ENCODE measurements at regions of chr10 and their contacts with region 1.

Region 1: DNA sequence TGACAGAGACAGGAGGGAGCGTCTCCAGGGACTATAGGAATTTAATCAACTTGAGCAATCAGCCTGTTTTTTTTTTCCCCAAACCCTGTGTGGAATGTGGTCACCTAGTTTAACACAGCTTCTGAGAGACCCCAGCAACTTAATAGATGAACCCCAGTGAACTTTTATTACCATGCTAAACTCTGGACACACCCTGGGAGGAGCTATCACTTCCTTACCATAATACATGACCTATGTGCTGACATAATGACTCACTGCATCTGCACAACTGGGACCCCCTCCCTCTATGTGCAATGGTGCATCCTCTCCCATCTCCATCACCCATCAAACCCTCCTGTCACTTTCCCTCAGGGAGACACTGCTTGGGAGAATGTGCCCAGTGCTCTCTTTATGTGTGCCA is 83.7 kb downstream of the EPC1 start:
- DNase-seq: peak in 1 of 2 donors; percentile 24
- H3K4me3 ChIP-seq: no peak overlapping the region
- H3K27ac ChIP-seq: no peak overlapping the region
- H3K4me1 ChIP-seq: no peaks in the 10 kb centered on the region
- H3K27me3 ChIP-seq: no peaks in the 10 kb centered on the region
- CTCF ChIP-seq: no peak
- EP300 ChIP-seq: no peak
- POLR2A ChIP-seq: no peak

Region 2: DNA sequence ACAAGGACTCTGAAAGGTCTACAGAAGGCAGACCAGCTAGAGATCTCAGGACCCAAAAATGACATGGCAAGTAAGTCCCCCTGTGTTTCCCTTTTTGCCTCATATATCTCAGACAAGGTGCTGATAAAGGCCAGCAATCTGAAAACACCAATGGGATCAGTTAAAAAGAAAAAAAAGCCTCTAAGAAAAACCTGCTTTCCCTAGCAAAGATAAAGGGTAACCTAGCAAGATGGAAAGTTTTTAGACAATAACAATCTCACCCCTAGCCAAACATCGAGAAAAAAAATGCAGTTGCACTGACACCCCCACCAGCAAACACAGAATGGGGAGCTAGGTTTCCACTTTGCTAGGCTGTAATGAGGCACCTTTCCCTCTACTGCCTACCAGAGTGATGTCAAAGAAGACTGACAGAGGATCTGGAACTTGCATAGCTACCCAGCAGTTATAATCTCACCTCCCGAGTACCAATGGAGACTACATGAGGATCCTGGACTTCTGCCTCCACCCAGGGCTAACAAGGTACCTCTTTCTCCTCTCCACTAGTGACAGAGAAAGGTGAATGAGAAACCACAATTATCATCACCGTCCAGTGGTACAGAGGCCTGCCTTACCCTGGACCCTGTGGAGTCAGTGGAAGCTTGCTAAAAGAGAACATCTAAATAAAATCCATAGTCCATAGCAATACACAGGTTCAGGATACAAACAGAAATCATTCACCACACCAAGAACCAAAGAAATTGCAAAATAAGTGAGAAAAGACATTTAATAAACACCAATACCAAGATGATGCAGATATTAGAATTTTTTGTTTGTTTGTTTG is 575.4 kb before region 1 on chr10:
- intact Hi-C with region 1: no loop called
- DNase-seq: no peak
- H3K4me3 ChIP-seq: no peak overlapping the region
- H3K27ac ChIP-seq: no peak overlapping the region
- H3K4me1 ChIP-seq: no peaks in the 10 kb centered on the region
- H3K27me3 ChIP-seq: no peaks in the 10 kb centered on the region
- CTCF ChIP-seq: no peak
- EP300 ChIP-seq: no peak
- POLR2A ChIP-seq: no peak

Region 3: GRCh38 chr10:32338262-32338661 is 75.0 kb after region 1 on chr10:
- intact Hi-C with region 1: loop called (anchors 5 kb)
- DNase-seq: no peak
- H3K4me3 ChIP-seq: no peak overlapping the region
- H3K27ac ChIP-seq: no peak overlapping the region
- H3K4me1 ChIP-seq: peaks cover 66 to 99% (median 85%) of the 10 kb centered on the region in 4 donors
- H3K27me3 ChIP-seq: no peaks in the 10 kb centered on the region
- CTCF ChIP-seq: no peak
- EP300 ChIP-seq: no peak
- POLR2A ChIP-seq: no peak